ENCODE measurements at regions of chr16 and their contacts with region 1.

Region 1: GRCh38 chr16:57899771-57900661 is 70.9 kb downstream of the CNGB1 start:
- DNase-seq: peak; percentile 72
- H3K4me3 ChIP-seq: no peak overlapping the region
- H3K27ac ChIP-seq: no peak overlapping the region
- H3K4me1 ChIP-seq: no peaks in the 10 kb centered on the region
- H3K27me3 ChIP-seq: peaks cover 6% of the 10 kb centered on the region
- CTCF ChIP-seq: peak; percentile 84

Region 2: GRCh38 chr16:57204675-57205074 is 695.3 kb before region 1 on chr16:
- intact Hi-C with region 1: no loop called
- DNase-seq: no peak
- H3K4me3 ChIP-seq: no peak overlapping the region
- H3K27ac ChIP-seq: no peak overlapping the region
- H3K4me1 ChIP-seq: no peaks in the 10 kb centered on the region
- H3K27me3 ChIP-seq: no peaks in the 10 kb centered on the region
- CTCF ChIP-seq: no peak

Region 3: GRCh38 chr16:58001781-58002408 is 101.9 kb after region 1 on chr16:
- intact Hi-C with region 1: loop called (anchors 2 kb)
- DNase-seq: no peak
- H3K4me3 ChIP-seq: peak overlapping the region; percentile 84
- H3K27ac ChIP-seq: no peak overlapping the region
- H3K4me1 ChIP-seq: no peaks in the 10 kb centered on the region
- H3K27me3 ChIP-seq: no peaks in the 10 kb centered on the region
- CTCF ChIP-seq: no peak

Region 4: GRCh38 chr16:58110571-58111301 is 210.7 kb after region 1 on chr16:
- intact Hi-C with region 1: loop called (anchors 10 kb)
- DNase-seq: no peak
- H3K4me3 ChIP-seq: no peak overlapping the region
- H3K27ac ChIP-seq: no peak overlapping the region
- H3K4me1 ChIP-seq: no peaks in the 10 kb centered on the region
- H3K27me3 ChIP-seq: no peaks in the 10 kb centered on the region
- CTCF ChIP-seq: no peak

Region 5: GRCh38 chr16:58299757-58300349 is 399.8 kb after region 1 on chr16:
- intact Hi-C with region 1: loop called (anchors 10 kb)
- DNase-seq: no peak
- H3K4me3 ChIP-seq: no peak overlapping the region
- H3K27ac ChIP-seq: no peak overlapping the region
- H3K4me1 ChIP-seq: no peaks in the 10 kb centered on the region
- H3K27me3 ChIP-seq: no peaks in the 10 kb centered on the region
- CTCF ChIP-seq: peak; percentile 51